Thyroid gland (tissue), 4 donors: ENCODE measurements at regions of chr12 and their contacts with region 1.

Region 1: DNA sequence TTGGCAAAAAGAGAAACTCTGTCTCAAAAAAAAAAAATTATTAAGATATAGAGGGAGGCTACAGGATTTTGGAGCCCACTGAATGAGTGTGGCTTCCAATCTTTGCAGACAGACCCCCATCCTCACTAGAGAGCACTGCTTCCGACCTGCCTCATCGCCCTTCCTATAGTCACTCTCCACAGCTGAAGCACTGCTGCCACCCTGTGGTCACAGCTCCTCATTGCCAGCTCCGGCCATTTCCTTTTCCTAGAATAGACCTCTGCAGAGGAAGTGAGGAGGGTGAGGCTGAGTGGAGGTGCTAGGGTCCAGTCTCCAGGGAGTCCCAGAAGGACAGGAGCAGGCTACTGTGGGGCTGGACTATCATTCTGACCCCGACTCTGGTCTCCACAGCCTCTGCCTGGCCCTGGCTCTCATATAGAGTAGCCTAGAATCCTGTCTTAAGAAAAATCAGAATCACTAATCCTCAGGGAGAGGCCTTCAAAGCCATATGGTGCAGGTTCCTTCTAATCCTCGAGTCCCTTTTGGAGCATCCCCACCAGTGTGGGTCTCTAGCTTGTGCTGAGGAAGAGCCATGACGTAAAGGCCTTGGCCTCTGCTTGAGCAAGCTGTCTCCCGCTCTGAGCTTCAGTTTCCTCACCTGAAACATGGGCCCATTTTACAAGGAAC is 1.4 kb upstream of the NPFF start:
- DNase-seq: peak; percentile 82 to 86
- H3K4me3 ChIP-seq: no peak overlapping the region
- H3K27ac ChIP-seq: no peak overlapping the region
- H3K4me1 ChIP-seq: peaks cover 5 to 17% of the 10 kb centered on the region in 2 donors
- H3K27me3 ChIP-seq: no peaks in the 10 kb centered on the region
- CTCF ChIP-seq: peak; percentile 63 to 91 (median 90)
- POLR2A ChIP-seq: no peak

Region 2: GRCh38 chr12:53454710-53455109 is 54.0 kb before region 1 on chr12:
- intact Hi-C with region 1: loop called (anchors 5 kb)
- DNase-seq: no peak
- H3K4me3 ChIP-seq: no peak overlapping the region
- H3K27ac ChIP-seq: no peak overlapping the region
- H3K4me1 ChIP-seq: peaks cover 13 to 21% of the 10 kb centered on the region in 2 donors
- H3K27me3 ChIP-seq: no peaks in the 10 kb centered on the region
- CTCF ChIP-seq: no peak
- POLR2A ChIP-seq: no peak

Region 3: DNA sequence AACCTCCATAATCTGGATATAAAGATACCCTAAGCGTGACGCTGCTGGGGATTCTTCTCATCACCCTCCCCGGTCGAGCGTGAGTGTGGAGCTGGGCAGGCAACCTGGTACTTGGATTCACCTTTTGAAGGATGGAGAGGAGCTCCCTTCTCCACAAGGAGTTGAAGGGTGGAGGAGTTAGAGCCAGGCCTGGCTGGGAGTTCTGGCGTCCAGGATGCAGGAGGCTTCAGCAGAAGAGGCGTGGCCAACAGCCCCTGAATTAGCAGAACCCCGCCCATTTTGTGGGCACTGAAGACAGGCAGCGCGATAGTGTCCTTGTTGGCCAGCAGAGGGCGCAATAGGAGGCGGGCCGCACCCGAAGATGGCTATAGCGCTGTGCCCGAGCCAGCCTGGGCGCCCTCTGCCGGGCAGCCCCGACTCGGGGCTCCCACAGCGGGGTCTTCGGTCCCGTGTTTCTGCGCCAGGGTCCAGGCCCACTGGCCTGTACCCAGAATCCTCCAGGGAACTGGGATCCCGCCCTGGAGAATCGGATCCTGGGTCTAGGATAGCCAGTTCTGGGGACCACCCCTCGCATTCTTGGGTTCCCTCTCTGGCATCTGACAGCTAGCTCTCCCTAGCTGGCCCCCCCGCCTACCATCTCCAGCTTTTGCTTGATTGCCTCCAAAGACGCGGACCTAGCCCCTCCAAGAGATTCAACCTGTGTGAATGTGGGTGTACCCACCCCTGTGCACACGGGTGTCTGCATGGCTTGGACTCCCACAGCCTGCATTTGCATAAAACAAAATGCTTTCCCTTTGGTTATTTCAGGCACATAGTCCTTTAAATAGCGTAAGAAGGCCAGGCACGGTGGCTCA is 706.1 kb after region 1 on chr12:
- intact Hi-C with region 1: no loop called
- DNase-seq: peak; percentile 76 to 86
- H3K4me3 ChIP-seq: no peak overlapping the region
- H3K27ac ChIP-seq: no peak overlapping the region
- H3K4me1 ChIP-seq: peaks cover 12 to 26% of the 10 kb centered on the region in 2 donors
- H3K27me3 ChIP-seq: peaks cover 15% of the 10 kb centered on the region
- CTCF ChIP-seq: peak; percentile 67 to 94 (median 80)
- POLR2A ChIP-seq: no peak